ENCODE measurements at regions of chr4 and their contacts with region 1.

Region 1: GRCh38 chr4:78749972-78750727 is 26.0 kb upstream of the BMP2K start:
- DNase-seq: no peak
- ATAC-seq: peak in 1 of 3 donors; percentile 61
- H3K4me3 ChIP-seq: no peak overlapping the region
- H3K4me3 Mint-ChIP-seq: no peak overlapping the region
- H3K27ac ChIP-seq: peak overlapping the region; percentile 62
- H3K27ac Mint-ChIP-seq: no peak overlapping the region
- H3K4me1 ChIP-seq: no peaks in the 10 kb centered on the region
- H3K4me1 Mint-ChIP-seq: no peaks in the 10 kb centered on the region
- H3K27me3 ChIP-seq: no peaks in the 10 kb centered on the region
- H3K27me3 Mint-ChIP-seq: no peaks in the 10 kb centered on the region
- CTCF ChIP-seq: no peak

Region 2: GRCh38 chr4:78720994-78721677 is 29.0 kb before region 1 on chr4:
- intact Hi-C with region 1: loop called (anchors 2 kb)
- DNase-seq: peak in 1 of 2 donors; percentile 26
- ATAC-seq: peak; percentile 58 to 76 (median 76)
- H3K4me3 ChIP-seq: no peak overlapping the region
- H3K4me3 Mint-ChIP-seq: peak overlapping the region; percentile 65
- H3K27ac ChIP-seq: peak overlapping the region; percentile 8
- H3K27ac Mint-ChIP-seq: peak overlapping the region; percentile 75 to 86
- H3K4me1 ChIP-seq: peaks cover 14% of the 10 kb centered on the region
- H3K4me1 Mint-ChIP-seq: peaks cover 20 to 32% of the 10 kb centered on the region in 2 donors
- H3K27me3 ChIP-seq: no peaks in the 10 kb centered on the region
- H3K27me3 Mint-ChIP-seq: no peaks in the 10 kb centered on the region
- CTCF ChIP-seq: no peak

Measured in natural killer cell (primary cell).